B cell (primary cell): ENCODE measurements at regions of chr16 and their contacts with region 1.

Region 1: DNA sequence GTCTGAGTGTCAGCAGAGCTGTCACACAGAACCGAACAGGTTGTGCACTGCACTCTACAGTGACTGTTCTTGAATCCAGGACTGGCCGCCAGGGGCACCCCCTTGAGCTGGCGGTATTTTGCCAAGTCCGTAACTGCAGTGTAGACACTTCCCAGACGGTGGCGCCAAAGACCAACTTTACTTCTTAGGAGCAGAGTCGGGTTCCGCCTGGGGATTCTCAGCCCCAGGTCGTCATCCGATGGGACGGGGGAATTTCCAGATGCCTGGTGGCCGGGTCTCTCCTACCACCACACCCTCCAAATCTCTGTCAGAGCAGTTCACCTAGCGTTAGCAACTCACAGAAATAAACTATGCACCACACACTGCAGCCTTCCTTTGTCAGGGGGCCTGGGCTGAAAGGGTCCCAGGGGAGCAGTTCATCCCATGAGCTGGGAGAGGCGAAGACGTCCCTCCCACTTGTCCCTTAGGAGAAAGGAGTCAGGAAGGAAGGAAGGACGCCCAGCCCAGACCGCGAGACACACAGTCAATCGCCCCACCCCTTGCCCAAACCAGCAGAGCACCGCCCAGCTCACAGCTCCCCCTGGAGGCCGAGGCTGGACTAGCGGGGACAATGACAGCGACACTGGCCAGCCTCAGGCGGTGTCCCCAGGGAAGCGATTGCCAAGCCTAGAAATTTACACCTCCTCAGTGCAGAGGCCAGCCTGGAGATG is 7.4 kb upstream of the RIPOR1 start:
- DNase-seq: peak; percentile 99
- ATAC-seq: peak; percentile 71
- H3K4me3 ChIP-seq: peak overlapping the region; percentile 47 to 74 (median 61)
- H3K4me3 Mint-ChIP-seq: peak overlapping the region; percentile 94
- H3K27ac ChIP-seq: peak overlapping the region; percentile 96 to 97
- H3K27ac Mint-ChIP-seq: peak overlapping the region; percentile 99
- H3K4me1 ChIP-seq: peaks cover 44 to 69% of the 10 kb centered on the region in 2 donors
- H3K4me1 Mint-ChIP-seq: peaks cover 77% of the 10 kb centered on the region
- H3K27me3 ChIP-seq: no peaks in the 10 kb centered on the region
- H3K27me3 Mint-ChIP-seq: no peaks in the 10 kb centered on the region
- CTCF ChIP-seq: peak; percentile 87

Region 2: DNA sequence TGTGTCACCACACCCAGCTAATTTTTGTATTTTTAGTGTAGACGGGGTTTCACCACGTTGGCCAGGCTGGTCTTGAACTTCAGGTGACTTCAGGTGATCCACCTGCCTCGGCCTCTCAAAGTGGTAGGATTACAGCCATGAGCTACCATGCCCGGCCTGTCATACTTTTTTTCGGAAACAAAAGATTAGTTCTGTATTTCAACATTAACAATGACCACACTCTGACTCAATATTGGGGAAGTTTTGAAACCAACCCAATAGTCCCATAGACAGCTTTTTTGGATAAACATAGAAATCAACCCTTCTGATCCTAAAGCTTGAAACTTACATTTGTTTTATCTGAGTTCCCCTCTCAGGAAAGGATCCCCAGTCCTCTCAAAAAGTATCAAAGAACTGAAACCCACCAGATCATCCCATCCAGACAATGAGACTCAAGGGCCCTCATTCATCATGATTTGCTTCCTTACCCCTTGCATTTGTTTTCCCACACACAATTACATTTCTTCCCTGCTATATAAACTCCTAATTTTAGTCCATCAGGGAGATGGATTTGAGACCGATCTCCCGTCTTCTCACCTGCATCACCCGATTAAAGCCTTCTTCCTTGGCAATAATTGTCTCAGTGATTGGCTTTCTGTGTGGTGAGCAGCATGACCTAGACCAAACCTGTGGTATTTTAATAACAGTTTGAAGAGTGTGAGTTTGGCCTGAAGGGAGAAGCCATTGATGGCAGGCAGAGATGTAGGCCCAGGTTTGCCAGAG is 30.7 kb before region 1 on chr16:
- CTCF ChIA-PET with region 1: interaction called, 817 read pairs
- POLR2A ChIA-PET with region 1: interaction called, 12 read pairs
- intact Hi-C with region 1: loop called (anchors 1 kb)
- DNase-seq: no peak
- ATAC-seq: no peak
- H3K4me3 ChIP-seq: no peak overlapping the region
- H3K4me3 Mint-ChIP-seq: peak overlapping the region; percentile 51
- H3K27ac ChIP-seq: peak overlapping the region; percentile 70 to 89
- H3K27ac Mint-ChIP-seq: peak overlapping the region; percentile 82
- H3K4me1 ChIP-seq: peaks cover 73 to 84% of the 10 kb centered on the region in 2 donors
- H3K4me1 Mint-ChIP-seq: peaks cover 71% of the 10 kb centered on the region
- H3K27me3 ChIP-seq: no peaks in the 10 kb centered on the region
- H3K27me3 Mint-ChIP-seq: no peaks in the 10 kb centered on the region
- CTCF ChIP-seq: no peak

Region 3: GRCh38 chr16:67504041-67505021 is 16.9 kb before region 1 on chr16:
- CTCF ChIA-PET with region 1: interaction called, 817 read pairs
- POLR2A ChIA-PET with region 1: no interaction called
- intact Hi-C with region 1: no loop called
- DNase-seq: peak; percentile 40
- ATAC-seq: peak; percentile 80
- H3K4me3 ChIP-seq: peak overlapping the region in 1 of 5 experiments; percentile 24
- H3K4me3 Mint-ChIP-seq: peak overlapping the region; percentile 68
- H3K27ac ChIP-seq: peak overlapping the region; percentile 47 to 77
- H3K27ac Mint-ChIP-seq: peak overlapping the region; percentile 91
- H3K4me1 ChIP-seq: peaks cover 34 to 46% of the 10 kb centered on the region in 2 donors
- H3K4me1 Mint-ChIP-seq: peaks cover 49% of the 10 kb centered on the region
- H3K27me3 ChIP-seq: no peaks in the 10 kb centered on the region
- H3K27me3 Mint-ChIP-seq: no peaks in the 10 kb centered on the region
- CTCF ChIP-seq: no peak

Region 4: GRCh38 chr16:67561824-67562525 is 40.7 kb after region 1 on chr16:
- CTCF ChIA-PET with region 1: interaction called, 123 read pairs
- POLR2A ChIA-PET with region 1: interaction called, 8 read pairs
- intact Hi-C with region 1: loop called (anchors 1 kb)
- DNase-seq: peak; percentile 99
- ATAC-seq: peak; percentile 74
- H3K4me3 ChIP-seq: peak overlapping the region; percentile 50 to 76 (median 60)
- H3K4me3 Mint-ChIP-seq: peak overlapping the region; percentile 89
- H3K27ac ChIP-seq: peak overlapping the region; percentile 71 to 80
- H3K27ac Mint-ChIP-seq: peak overlapping the region; percentile 95
- H3K4me1 ChIP-seq: peaks cover 42 to 55% of the 10 kb centered on the region in 2 donors
- H3K4me1 Mint-ChIP-seq: peaks cover 50% of the 10 kb centered on the region
- H3K27me3 ChIP-seq: no peaks in the 10 kb centered on the region
- H3K27me3 Mint-ChIP-seq: no peaks in the 10 kb centered on the region
- CTCF ChIP-seq: no peak

Region 5: GRCh38 chr16:67660564-67661028 is 139.3 kb after region 1 on chr16 and contains the start of gene PARD6A:
- CTCF ChIA-PET with region 1: interaction called, 136 read pairs
- POLR2A ChIA-PET with region 1: interaction called, 14 read pairs
- intact Hi-C with region 1: loop called (anchors 1 kb)
- DNase-seq: peak; percentile 99
- ATAC-seq: peak; percentile 83
- H3K4me3 ChIP-seq: peak within 1 kb of the TSS; percentile 80 to 99 (median 95)
- H3K4me3 Mint-ChIP-seq: peak within 1 kb of the TSS; percentile 97
- H3K27ac ChIP-seq: peak within 1 kb of the TSS; percentile 88 to 93
- H3K27ac Mint-ChIP-seq: peak within 1 kb of the TSS; percentile 97
- H3K4me1 ChIP-seq: peaks cover 14 to 24% of the 10 kb centered on the region in 2 donors
- H3K4me1 Mint-ChIP-seq: peaks cover 35% of the 10 kb centered on the region
- H3K27me3 ChIP-seq: no peaks in the 10 kb centered on the region
- H3K27me3 Mint-ChIP-seq: no peaks in the 10 kb centered on the region
- CTCF ChIP-seq: no peak
- total RNA-seq, gene PARD6A: 13.6 and 14.8 TPM in 2 replicates

Region 6: GRCh38 chr16:67719048-67719777 is 198.0 kb after region 1 on chr16 and contains the start of gene GFOD2:
- CTCF ChIA-PET with region 1: interaction called, 8 read pairs
- POLR2A ChIA-PET with region 1: no interaction called
- intact Hi-C with region 1: loop called (anchors 1 kb)
- DNase-seq: peak; percentile 97
- ATAC-seq: peak; percentile 94
- H3K4me3 ChIP-seq: peak within 1 kb of the TSS; percentile 66 to 93 (median 87)
- H3K4me3 Mint-ChIP-seq: peak within 1 kb of the TSS; percentile 99
- H3K27ac ChIP-seq: peak within 1 kb of the TSS; percentile 89 to 93
- H3K27ac Mint-ChIP-seq: peak within 1 kb of the TSS; percentile 98
- H3K4me1 ChIP-seq: peaks cover 18 to 20% of the 10 kb centered on the region in 2 donors
- H3K4me1 Mint-ChIP-seq: peaks cover 38% of the 10 kb centered on the region
- H3K27me3 ChIP-seq: no peaks in the 10 kb centered on the region
- H3K27me3 Mint-ChIP-seq: no peaks in the 10 kb centered on the region
- CTCF ChIP-seq: no peak
- total RNA-seq, gene GFOD2: 18.1 and 18.2 TPM in 2 replicates